Sigmoid colon (tissue), 7 donors: ENCODE measurements at regions of chr12 and their contacts with region 1.

Region 1: DNA sequence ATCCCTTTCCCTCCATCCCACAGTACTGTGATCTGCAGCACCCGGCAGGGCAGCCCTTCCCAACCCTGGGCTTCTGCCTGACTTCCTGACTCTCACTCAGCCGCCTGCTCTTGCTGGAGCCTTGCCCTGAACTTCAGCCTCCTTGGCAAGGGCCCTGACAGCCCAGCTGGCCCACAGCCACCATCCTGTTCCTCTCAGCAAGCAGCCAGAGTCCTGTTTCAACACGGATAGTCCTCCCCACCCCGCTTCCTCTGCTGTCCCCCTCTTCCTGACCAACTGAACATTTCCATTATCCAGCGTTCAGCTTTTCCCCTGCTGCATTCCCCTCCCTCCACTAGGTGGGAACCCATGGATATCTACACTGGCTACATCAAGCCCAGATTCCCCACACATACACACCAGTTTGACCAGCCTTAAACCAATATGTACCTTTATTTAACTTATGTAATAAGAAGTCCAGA is 74.0 kb upstream of the MDM1 start:
- DNase-seq: peak; percentile 98
- H3K4me3 ChIP-seq: peak overlapping the region in 1 of 4 donors; percentile 4
- H3K27ac ChIP-seq: peak overlapping the region; percentile 51 to 84 (median 72)
- H3K4me1 ChIP-seq: peaks cover 0 to 27% (median 21%) of the 10 kb centered on the region in 4 donors
- H3K27me3 ChIP-seq: no peaks in the 10 kb centered on the region
- CTCF ChIP-seq: peak; percentile 21 to 43 (median 28)
- EP300 ChIP-seq: peak in 1 of 4 donors; percentile 22
- POLR2A ChIP-seq: no peak

Region 2: GRCh38 chr12:68067762-68068376 is 338.3 kb before region 1 on chr12:
- intact Hi-C with region 1: no loop called
- DNase-seq: no peak
- H3K4me3 ChIP-seq: no peak overlapping the region
- H3K27ac ChIP-seq: no peak overlapping the region
- H3K4me1 ChIP-seq: no peaks in the 10 kb centered on the region
- H3K27me3 ChIP-seq: no peaks in the 10 kb centered on the region
- CTCF ChIP-seq: no peak
- EP300 ChIP-seq: no peak
- POLR2A ChIP-seq: no peak

Region 3: GRCh38 chr12:68364893-68365725 is 41.1 kb before region 1 on chr12:
- intact Hi-C with region 1: loop called (anchors 1 kb)
- DNase-seq: peak; percentile 95
- H3K4me3 ChIP-seq: peak overlapping the region; percentile 18 to 44 (median 35)
- H3K27ac ChIP-seq: peak overlapping the region; percentile 80 to 88 (median 84)
- H3K4me1 ChIP-seq: peaks cover 0 to 20% (median 15%) of the 10 kb centered on the region in 4 donors
- H3K27me3 ChIP-seq: no peaks in the 10 kb centered on the region
- CTCF ChIP-seq: no peak
- EP300 ChIP-seq: no peak
- POLR2A ChIP-seq: peak in 1 of 2 donors; percentile 31

Region 4: DNA sequence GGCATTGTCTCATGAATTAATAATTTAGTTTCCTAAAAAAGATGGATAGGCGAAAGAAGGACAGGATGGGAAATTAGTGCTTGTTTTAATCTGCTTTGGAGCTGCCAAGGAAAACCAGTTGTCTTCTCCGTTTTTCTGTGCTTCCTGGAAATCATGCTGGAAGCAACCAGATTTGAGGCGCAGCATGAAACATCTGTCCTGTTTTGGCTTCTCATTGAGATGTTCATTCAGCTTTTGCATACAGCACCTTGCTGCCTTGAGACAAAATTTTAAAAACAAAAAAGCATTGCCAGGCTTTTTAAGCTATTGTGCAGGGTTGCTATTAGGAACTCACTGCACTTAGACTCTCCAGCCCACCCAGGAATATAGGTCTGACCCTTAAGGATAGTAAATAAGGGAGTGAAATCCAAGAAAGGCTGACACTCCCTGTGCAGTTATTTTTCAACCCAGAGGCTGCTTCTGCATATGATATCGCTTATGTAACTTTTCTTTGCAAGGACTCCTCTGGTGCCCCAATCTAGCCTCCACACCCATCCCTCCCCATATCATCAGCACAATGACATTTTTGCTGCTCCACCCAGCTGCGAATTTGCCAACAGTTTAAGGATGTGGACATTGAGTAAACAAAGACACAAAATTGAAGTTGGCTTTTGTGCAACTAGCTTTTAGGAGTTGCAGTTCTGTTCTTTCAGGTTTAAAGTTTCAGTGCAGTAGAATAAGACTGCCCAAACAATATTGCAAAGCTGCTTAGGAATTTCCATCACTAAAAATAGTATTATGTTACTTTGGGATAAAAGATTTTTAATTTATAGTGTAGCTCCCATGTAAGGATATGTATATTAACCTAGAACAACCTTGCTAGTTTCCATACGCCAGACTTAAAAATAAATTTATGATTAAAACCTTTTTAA is 27.0 kb before region 1 on chr12:
- intact Hi-C with region 1: no loop called
- DNase-seq: no peak
- H3K4me3 ChIP-seq: no peak overlapping the region
- H3K27ac ChIP-seq: peak overlapping the region in 1 of 4 donors; percentile 2
- H3K4me1 ChIP-seq: peaks cover 0 to 16% (median 9%) of the 10 kb centered on the region in 4 donors
- H3K27me3 ChIP-seq: no peaks in the 10 kb centered on the region
- CTCF ChIP-seq: no peak
- EP300 ChIP-seq: no peak
- POLR2A ChIP-seq: no peak

Region 5: DNA sequence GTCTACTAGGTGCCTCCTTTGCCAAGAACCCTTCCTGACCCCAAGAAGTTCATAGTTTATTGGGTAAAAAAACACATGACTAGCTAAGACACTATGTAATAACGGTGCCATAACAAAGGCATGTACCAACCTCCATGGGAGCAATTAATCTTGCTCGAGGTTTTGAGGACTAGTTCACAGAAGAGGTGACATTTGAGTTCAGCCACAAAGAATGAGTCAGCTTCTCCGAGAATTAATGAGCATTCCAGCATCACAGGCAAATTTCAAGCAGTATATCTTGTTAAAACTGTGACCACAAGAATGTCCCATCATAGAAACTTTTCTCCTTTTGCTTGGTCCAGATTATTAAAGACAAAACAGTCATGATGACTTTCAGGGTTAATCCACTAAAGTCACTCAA is 91.5 kb after region 1 on chr12:
- intact Hi-C with region 1: loop called (anchors 5 kb)
- DNase-seq: no peak
- H3K4me3 ChIP-seq: no peak overlapping the region
- H3K27ac ChIP-seq: peak overlapping the region in 3 of 4 donors; percentile 29 to 78 (median 73)
- H3K4me1 ChIP-seq: peaks cover 0 to 28% (median 24%) of the 10 kb centered on the region in 4 donors
- H3K27me3 ChIP-seq: no peaks in the 10 kb centered on the region
- CTCF ChIP-seq: no peak
- EP300 ChIP-seq: peak in 2 of 4 donors; percentile 36 to 67
- POLR2A ChIP-seq: no peak